BJ (cell line): ENCODE measurements at regions of chr17 and their contacts with region 1.

Region 1: GRCh38 chr17:50478391-50479381 is at the start of gene RSAD1:
- DNase-seq: no peak
- H3K4me3 ChIP-seq: peak within 1 kb of the TSS; percentile 55
- H3K27me3 ChIP-seq: peaks cover 2% of the 10 kb centered on the region; the same call in 1 of the 2 replicates
- CTCF ChIP-seq: peak; percentile 53
- polyA plus RNA-seq, gene RSAD1: 17.5 and 22.6 TPM in 2 replicates

Region 2: DNA sequence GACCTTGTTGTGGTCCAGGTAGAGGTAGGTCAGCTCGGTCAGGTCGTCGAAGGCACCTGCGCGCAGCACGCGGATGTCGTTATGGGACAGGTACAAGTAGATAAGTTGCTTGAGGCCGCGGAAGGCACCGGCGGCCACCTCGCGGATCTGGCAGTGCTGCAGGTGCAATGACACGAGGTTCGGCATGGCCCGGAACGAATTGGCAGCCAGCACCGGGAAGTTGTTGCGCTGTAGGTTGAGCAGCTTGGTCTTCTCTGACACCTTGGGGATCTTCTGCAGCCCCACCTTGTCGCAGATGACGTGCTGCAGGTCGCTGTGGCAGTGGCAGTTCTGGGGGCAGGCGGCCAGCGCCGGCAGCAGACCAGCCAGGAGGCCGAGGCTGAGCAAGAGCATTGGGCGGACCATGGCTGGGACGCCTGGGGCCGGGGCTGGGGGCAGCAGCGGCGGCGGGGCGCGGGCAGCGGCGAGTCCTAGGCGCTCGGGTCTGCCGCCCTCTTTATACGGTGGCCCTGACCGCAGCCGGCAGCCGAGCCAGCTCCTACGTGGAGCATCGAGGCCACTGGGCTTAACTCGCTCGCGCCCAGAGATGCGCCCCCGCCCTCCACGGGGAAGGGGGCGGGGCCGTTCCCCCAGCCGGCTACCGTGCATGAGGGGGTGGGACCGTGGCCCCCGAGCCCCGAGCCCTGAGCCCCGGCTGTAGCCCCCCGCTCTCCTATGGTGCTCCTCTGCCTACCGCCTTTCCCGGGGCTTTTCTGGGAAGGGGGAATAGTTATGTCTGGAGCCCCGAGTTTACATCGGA is 10.1 kb before region 1 on chr17 and contains the start of gene CHAD:
- CTCF ChIA-PET with region 1: interaction called, 19 read pairs
- POLR2A ChIA-PET with region 1: no interaction called
- DNase-seq: no peak
- H3K4me3 ChIP-seq: peak within 1 kb of the TSS; percentile 25
- H3K27me3 ChIP-seq: peaks cover 20% of the 10 kb centered on the region
- CTCF ChIP-seq: no peak
- polyA plus RNA-seq, gene CHAD: not detected in 2 replicates

Region 3: GRCh38 chr17:50501054-50501453 is 22.4 kb after region 1 on chr17:
- CTCF ChIA-PET with region 1: interaction called, 14 read pairs
- POLR2A ChIA-PET with region 1: no interaction called
- DNase-seq: no peak
- H3K4me3 ChIP-seq: no peak overlapping the region
- H3K27me3 ChIP-seq: no peaks in the 10 kb centered on the region
- CTCF ChIP-seq: peak; percentile 49

Region 4: DNA sequence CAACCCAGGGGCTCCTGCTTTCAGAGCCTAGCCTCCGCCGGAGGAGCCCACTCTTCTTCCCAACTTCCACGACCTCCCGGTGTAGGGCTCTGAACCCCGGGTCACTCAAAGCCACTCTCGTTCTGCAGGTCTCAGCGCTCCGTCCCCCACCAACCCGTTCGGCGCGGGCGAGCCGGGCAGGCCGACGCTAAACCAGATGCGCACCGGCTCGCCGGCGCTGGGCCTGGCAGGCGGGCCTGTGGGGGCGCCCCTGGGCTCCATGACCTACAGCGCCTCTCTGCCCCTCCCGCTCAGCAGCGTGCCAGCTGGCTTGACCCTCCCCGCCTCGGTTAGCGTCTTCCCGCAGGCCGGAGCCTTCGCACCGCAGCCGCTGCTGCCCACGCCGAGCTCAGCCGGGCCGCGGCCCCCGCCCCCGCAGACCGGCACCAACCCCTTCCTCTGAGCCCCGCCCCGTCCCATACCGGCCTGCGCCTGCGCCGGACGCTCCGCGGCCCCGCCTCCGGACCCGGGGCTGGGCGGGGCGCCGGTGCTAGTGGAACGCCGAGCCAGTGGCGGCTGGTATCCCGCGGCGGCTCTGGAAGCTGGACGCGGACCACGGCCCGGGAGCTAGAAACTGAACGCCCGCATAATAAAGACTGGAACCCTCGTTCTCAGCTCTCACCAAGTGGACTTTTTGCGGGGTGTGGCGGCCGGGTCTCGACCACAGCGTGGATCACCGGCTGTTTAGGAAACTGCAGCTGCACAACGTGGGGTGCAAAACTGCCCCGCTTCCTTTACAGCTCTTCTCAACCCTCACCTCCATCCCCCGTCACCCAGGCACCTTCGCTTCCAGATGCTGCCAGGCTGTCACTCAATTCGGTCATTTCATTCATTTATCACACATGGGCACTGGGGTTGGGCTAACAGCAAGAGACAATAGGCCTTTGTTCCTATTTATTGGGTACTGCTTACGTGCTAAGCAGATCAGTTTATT is 63.3 kb after region 1 on chr17:
- CTCF ChIA-PET with region 1: interaction called, 13 read pairs
- POLR2A ChIA-PET with region 1: no interaction called
- DNase-seq: peak; percentile 15
- H3K4me3 ChIP-seq: peak overlapping the region; percentile 59
- H3K27me3 ChIP-seq: no peaks in the 10 kb centered on the region
- CTCF ChIP-seq: peak; percentile 16; the same call in 1 of the 2 replicates

Region 5: DNA sequence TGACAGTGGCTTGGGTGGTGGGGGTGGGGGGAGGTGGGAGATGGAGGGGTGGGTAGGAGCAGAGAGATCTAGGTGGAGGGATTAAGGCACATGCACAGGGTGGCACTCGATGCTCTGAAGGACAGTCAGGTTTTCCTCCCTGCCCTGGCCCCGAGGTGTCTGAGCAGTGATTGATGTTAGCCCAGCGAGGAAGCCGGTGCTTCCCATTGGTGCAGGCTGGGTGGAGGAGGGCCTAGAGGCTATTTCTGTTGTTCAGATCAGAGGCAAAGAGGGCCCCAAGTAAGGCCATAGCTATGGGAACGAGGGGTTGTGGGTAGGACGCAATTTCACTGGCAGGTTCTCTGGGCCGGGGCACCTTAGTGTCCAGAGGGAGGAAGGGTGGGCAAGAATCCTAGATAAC is 105.0 kb after region 1 on chr17:
- CTCF ChIA-PET with region 1: no interaction called
- POLR2A ChIA-PET with region 1: no interaction called
- DNase-seq: no peak
- H3K4me3 ChIP-seq: no peak overlapping the region
- H3K27me3 ChIP-seq: peaks cover 26% of the 10 kb centered on the region
- CTCF ChIP-seq: no peak